WTC11 (cell line): ENCODE measurements at regions of chr5 and their contacts with region 1.

Region 1: GRCh38 chr5:141524604-141525597 is 36.0 kb downstream of the PCDHGC5 start:
- DNase-seq: peak; percentile 93
- ATAC-seq: peak; percentile 98
- H3K4me3 Mint-ChIP-seq: no peak overlapping the region
- H3K27ac Mint-ChIP-seq: peak overlapping the region; percentile 87
- H3K4me1 Mint-ChIP-seq: peaks cover 23% of the 10 kb centered on the region
- H3K27me3 Mint-ChIP-seq: no peaks in the 10 kb centered on the region
- CTCF ChIP-seq: peak; percentile 97

Region 2: DNA sequence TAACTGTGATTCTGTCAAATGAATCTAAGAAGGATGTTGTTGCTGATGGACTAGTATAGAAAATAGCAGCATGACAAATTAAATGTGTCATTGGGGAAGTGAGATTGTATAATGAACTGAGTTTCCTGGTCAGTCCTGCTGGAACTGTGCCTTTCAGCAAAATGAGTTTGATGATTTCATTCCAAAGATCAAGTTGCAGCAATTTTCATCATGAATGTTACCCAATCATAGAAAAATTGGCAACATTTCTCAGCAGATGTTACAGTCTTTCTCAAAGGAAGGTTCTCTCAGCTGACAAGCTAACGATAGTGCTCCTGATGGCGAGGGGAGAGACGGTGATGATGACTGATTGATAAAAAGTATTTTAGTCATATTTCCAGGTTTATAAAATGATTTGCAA is 547.9 kb before region 1 on chr5:
- CTCF ChIA-PET with region 1: no interaction called
- POLR2A ChIA-PET with region 1: no interaction called
- DNase-seq: no peak
- ATAC-seq: no peak
- H3K4me3 Mint-ChIP-seq: no peak overlapping the region
- H3K27ac Mint-ChIP-seq: peak overlapping the region; percentile 15; the same call in 1 of the 2 replicates
- H3K4me1 Mint-ChIP-seq: peaks cover 33% of the 10 kb centered on the region
- H3K27me3 Mint-ChIP-seq: no peaks in the 10 kb centered on the region
- CTCF ChIP-seq: no peak

Region 3: DNA sequence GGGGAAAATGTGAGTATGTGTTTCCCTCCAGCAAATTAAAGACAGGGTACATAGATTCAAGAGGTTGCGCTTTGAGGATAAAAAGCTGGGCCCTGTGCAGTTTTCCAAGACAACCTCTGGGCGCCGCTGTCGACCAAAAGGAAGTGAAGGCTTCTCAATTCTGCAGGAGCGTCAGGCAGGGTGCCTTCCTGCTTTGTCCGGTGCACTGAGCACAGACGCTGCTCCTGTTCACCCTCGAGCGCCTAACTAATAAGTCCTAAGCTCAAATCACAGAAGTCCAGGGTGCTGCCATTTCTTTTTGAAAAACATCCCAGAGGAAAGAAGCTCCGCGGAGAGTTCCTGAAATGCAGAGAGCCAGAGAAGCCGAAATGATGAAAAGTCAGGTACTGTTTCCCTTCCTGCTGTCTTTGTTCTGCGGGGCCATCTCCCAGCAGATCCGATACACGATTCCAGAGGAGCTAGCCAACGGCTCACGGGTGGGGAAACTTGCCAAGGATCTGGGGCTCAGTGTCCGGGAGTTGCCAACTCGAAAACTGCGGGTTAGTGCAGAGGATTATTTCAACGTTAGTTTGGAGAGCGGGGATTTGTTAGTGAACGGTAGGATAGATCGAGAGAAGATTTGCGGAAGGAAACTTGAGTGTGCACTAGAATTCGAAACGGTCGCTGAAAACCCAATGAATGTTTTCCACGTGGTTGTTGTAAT is 174.8 kb before region 1 on chr5 and contains the start of gene PCDHGB1:
- CTCF ChIA-PET with region 1: interaction called, 11 read pairs
- POLR2A ChIA-PET with region 1: no interaction called
- DNase-seq: peak; percentile 86
- ATAC-seq: peak; percentile 96
- H3K4me3 Mint-ChIP-seq: peak within 1 kb of the TSS; percentile 72
- H3K27ac Mint-ChIP-seq: peak within 1 kb of the TSS; percentile 47; the same call in 1 of the 2 replicates
- H3K4me1 Mint-ChIP-seq: peaks cover 2% of the 10 kb centered on the region
- H3K27me3 Mint-ChIP-seq: peaks cover 3% of the 10 kb centered on the region
- CTCF ChIP-seq: peak; percentile 50
- total RNA-seq, gene PCDHGB1: 4.9 to 5.6 TPM (median 5.5 TPM) in 3 replicates

Region 4: GRCh38 chr5:141387233-141387949 is 137.5 kb before region 1 on chr5 and contains the start of gene PCDHGB4:
- CTCF ChIA-PET with region 1: interaction called, 14 read pairs
- POLR2A ChIA-PET with region 1: no interaction called
- DNase-seq: peak; percentile 80
- ATAC-seq: peak; percentile 96
- H3K4me3 Mint-ChIP-seq: peak within 1 kb of the TSS; percentile 81
- H3K27ac Mint-ChIP-seq: no peak within 1 kb of the TSS
- H3K4me1 Mint-ChIP-seq: 0 out of 2 replicates have a peak, but pooled peaks cover 3% of the 10 kb centered on the region
- H3K27me3 Mint-ChIP-seq: peaks cover 37% of the 10 kb centered on the region
- CTCF ChIP-seq: peak; percentile 48; the same call in 1 of the 2 replicates
- total RNA-seq, gene PCDHGB4: 7.8 to 9.1 TPM (median 8.8 TPM) in 3 replicates

Region 5: GRCh38 chr5:141475625-141476131 is 49.2 kb before region 1 on chr5 and contains the start of gene PCDHGC3:
- CTCF ChIA-PET with region 1: interaction called, 34 read pairs
- POLR2A ChIA-PET with region 1: no interaction called
- DNase-seq: peak; percentile 92
- ATAC-seq: peak; percentile 96
- H3K4me3 Mint-ChIP-seq: peak within 1 kb of the TSS; percentile 92
- H3K27ac Mint-ChIP-seq: peak within 1 kb of the TSS; percentile 93
- H3K4me1 Mint-ChIP-seq: peaks cover 35% of the 10 kb centered on the region
- H3K27me3 Mint-ChIP-seq: peaks cover 28% of the 10 kb centered on the region
- CTCF ChIP-seq: no peak
- total RNA-seq, gene PCDHGC3: 28.1 to 29.4 TPM (median 29.1 TPM) in 3 replicates

Region 6: DNA sequence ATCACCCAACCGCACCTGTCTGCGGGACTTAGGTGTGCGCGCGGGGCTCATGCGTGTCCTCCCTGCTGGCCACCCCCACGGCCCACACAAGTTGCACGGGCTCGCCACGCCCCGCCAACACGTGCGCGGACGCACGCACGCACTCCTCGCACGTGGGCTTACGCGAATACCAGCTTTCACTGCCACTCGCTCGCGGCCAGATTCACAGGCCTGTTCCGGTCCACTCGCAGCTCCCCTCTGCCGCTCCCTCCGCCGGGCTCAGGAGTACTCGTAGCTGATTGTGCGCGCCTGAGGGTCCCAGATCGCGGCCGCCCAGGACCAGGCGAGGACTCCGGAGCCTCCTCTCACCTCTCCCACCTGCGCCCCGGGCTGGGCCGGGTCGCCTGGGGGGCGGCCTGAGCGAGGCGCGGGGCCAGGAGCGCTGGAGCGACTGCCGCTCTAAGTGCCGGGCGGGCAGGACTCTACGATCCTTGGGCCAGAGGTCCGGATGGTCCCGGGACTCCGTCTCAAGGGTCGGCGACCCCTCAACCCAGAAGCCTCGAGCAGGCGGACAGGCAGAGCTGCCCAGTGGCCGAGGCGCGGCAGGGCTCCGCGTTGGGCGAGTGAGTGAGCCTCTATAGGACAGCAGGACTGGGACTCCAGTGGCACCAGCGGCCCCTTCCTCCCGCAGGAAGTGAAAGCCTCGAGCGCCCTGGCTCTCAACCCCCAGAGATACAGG is 32.6 kb before region 1 on chr5:
- CTCF ChIA-PET with region 1: interaction called, 27 read pairs
- POLR2A ChIA-PET with region 1: no interaction called
- DNase-seq: peak; percentile 49
- ATAC-seq: peak; percentile 10
- H3K4me3 Mint-ChIP-seq: peak overlapping the region; percentile 66
- H3K27ac Mint-ChIP-seq: no peak overlapping the region
- H3K4me1 Mint-ChIP-seq: peaks cover 57% of the 10 kb centered on the region
- H3K27me3 Mint-ChIP-seq: peaks cover 52% of the 10 kb centered on the region
- CTCF ChIP-seq: no peak

Region 7: DNA sequence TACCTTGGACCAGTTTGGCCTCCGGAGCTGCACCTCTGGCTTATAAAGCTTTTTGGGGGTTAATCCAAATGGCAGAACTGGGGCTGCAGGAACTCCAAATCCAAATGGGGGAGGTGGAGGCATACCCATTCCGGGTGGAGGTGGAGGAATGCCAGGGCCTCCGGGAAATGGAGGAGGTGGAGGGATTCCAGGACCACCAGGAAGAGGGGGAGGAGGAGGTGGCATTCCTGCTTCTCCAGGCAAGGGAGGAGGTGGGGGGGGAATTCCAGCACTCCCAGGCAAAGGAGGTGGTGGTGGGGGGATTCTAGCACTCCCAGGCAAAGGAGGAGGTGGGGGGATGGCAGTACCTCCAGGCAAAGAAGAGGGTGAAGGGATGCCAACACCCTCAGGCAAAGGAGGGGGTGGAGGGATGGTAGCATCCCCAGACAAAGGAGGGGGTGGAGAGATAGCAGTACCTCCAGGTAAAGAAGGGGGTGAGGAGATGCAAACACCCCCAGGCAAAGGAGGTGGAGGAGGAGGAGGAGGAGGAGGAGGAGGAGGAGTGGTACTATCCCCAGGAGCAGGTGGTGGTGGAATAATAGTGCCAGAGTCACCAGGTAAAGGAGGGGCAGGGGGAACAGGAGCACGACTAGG is 48.7 kb after region 1 on chr5:
- CTCF ChIA-PET with region 1: no interaction called
- POLR2A ChIA-PET with region 1: no interaction called
- DNase-seq: no peak
- ATAC-seq: 0 out of 2 replicates have a peak, but pooled peaks have one; percentile 24
- H3K4me3 Mint-ChIP-seq: no peak overlapping the region
- H3K27ac Mint-ChIP-seq: no peak overlapping the region
- H3K4me1 Mint-ChIP-seq: peaks cover 5% of the 10 kb centered on the region
- H3K27me3 Mint-ChIP-seq: no peaks in the 10 kb centered on the region
- CTCF ChIP-seq: no peak

Region 8: GRCh38 chr5:141590127-141590526 is 65.2 kb after region 1 on chr5:
- CTCF ChIA-PET with region 1: no interaction called
- POLR2A ChIA-PET with region 1: no interaction called
- DNase-seq: no peak
- ATAC-seq: no peak
- H3K4me3 Mint-ChIP-seq: no peak overlapping the region
- H3K27ac Mint-ChIP-seq: no peak overlapping the region
- H3K4me1 Mint-ChIP-seq: no peaks in the 10 kb centered on the region
- H3K27me3 Mint-ChIP-seq: no peaks in the 10 kb centered on the region
- CTCF ChIP-seq: no peak

Region 9: GRCh38 chr5:141783005-141783941 is 258.4 kb after region 1 on chr5:
- CTCF ChIA-PET with region 1: no interaction called
- POLR2A ChIA-PET with region 1: no interaction called
- DNase-seq: peak; percentile 48
- ATAC-seq: peak; percentile 29
- H3K4me3 Mint-ChIP-seq: no peak overlapping the region
- H3K27ac Mint-ChIP-seq: no peak overlapping the region
- H3K4me1 Mint-ChIP-seq: peaks cover 43% of the 10 kb centered on the region
- H3K27me3 Mint-ChIP-seq: no peaks in the 10 kb centered on the region
- CTCF ChIP-seq: no peak